ENCODE measurements at regions of chr1 and their contacts with region 1.

Region 1: GRCh38 chr1:109397538-109398342 is at the start of gene SORT1:
- DNase-seq: peak; percentile 94
- H3K4me3 ChIP-seq: peak within 1 kb of the TSS; percentile 84
- H3K27ac ChIP-seq: peak within 1 kb of the TSS; percentile 39
- H3K4me1 ChIP-seq: peaks cover 52% of the 10 kb centered on the region
- CTCF ChIP-seq: peak; percentile 60
- total RNA-seq, gene SORT1: 16.2 and 21.8 TPM in 2 replicates

Region 2: GRCh38 chr1:109099938-109100773 is 297.6 kb before region 1 on chr1:
- CTCF ChIA-PET with region 1: no interaction called
- POLR2A ChIA-PET with region 1: interaction called, 3 read pairs
- intact Hi-C with region 1: loop called (anchors 10 kb)
- DNase-seq: peak; percentile 99
- H3K4me3 ChIP-seq: peak overlapping the region; percentile 98
- H3K27ac ChIP-seq: peak overlapping the region; percentile 64
- H3K4me1 ChIP-seq: peaks cover 9% of the 10 kb centered on the region
- CTCF ChIP-seq: peak; percentile 86

Region 3: DNA sequence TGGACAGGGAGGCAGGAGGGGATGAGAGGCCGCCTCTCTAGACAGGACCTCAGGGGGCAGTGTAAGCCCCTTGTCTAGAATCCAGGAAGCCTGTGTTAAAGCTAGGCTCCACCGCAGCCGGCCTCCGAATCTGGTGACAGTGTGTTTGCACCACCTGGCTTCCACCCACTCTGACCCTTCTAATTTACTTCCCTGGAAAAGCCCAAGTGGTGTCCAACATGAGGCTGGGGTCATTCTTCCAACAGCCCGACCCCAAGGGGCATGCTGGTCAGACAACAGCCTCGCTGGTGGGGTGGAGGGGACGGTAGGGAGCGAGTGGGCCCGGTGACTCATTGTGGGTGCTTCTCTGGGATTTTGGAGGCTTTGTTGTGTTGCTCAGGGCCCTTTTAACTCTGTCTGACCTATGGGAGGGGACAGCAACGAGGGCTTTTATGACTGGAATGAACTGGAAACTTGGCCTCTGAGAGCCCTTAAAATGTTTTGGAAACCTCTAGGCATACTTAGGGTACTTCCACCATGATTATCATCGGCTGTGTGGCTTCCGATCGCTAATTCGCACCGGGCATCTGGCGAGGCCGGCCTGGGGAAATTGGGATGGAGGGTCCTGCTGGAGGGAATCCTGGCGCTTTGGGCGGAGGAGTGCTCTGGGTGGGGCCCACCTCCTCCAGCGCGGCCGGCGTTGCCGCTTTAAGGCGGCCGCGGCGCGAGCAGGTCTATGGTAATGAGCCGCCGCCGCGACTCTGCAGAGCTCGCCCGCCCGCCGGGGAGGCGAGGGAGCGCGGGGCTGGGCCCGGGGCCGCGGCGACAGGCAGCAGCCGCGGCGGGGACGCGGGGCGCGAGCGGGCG is 148.7 kb before region 1 on chr1 and contains the start of gene CELSR2:
- CTCF ChIA-PET with region 1: no interaction called
- POLR2A ChIA-PET with region 1: interaction called, 10 read pairs
- intact Hi-C with region 1: no loop called
- DNase-seq: peak; percentile 88
- H3K4me3 ChIP-seq: peak within 1 kb of the TSS; percentile 72
- H3K27ac ChIP-seq: no peak within 1 kb of the TSS
- H3K4me1 ChIP-seq: peaks cover 21% of the 10 kb centered on the region
- CTCF ChIP-seq: no peak
- total RNA-seq, gene CELSR2: 5.0 and 6.9 TPM in 2 replicates

Region 4: GRCh38 chr1:109277434-109278204 is 120.1 kb before region 1 on chr1:
- CTCF ChIA-PET with region 1: interaction called, 12 read pairs
- POLR2A ChIA-PET with region 1: interaction called, 55 read pairs
- intact Hi-C with region 1: loop called (anchors 1 kb)
- DNase-seq: peak; percentile 83
- H3K4me3 ChIP-seq: no peak overlapping the region
- H3K27ac ChIP-seq: no peak overlapping the region
- H3K4me1 ChIP-seq: peaks cover 12% of the 10 kb centered on the region
- CTCF ChIP-seq: peak; percentile 92

Region 5: GRCh38 chr1:109341944-109342930 is 55.5 kb before region 1 on chr1:
- CTCF ChIA-PET with region 1: no interaction called
- POLR2A ChIA-PET with region 1: no interaction called
- intact Hi-C with region 1: loop called (anchors 5 kb)
- DNase-seq: no peak
- H3K4me3 ChIP-seq: no peak overlapping the region
- H3K27ac ChIP-seq: no peak overlapping the region
- H3K4me1 ChIP-seq: no peaks in the 10 kb centered on the region
- CTCF ChIP-seq: no peak

Region 6: GRCh38 chr1:109386054-109386717 is 11.6 kb before region 1 on chr1:
- CTCF ChIA-PET with region 1: no interaction called
- POLR2A ChIA-PET with region 1: interaction called, 21 read pairs
- intact Hi-C with region 1: no loop called
- DNase-seq: no peak
- H3K4me3 ChIP-seq: no peak overlapping the region
- H3K27ac ChIP-seq: peak overlapping the region; percentile 32
- H3K4me1 ChIP-seq: peaks cover 68% of the 10 kb centered on the region
- CTCF ChIP-seq: no peak

Region 7: DNA sequence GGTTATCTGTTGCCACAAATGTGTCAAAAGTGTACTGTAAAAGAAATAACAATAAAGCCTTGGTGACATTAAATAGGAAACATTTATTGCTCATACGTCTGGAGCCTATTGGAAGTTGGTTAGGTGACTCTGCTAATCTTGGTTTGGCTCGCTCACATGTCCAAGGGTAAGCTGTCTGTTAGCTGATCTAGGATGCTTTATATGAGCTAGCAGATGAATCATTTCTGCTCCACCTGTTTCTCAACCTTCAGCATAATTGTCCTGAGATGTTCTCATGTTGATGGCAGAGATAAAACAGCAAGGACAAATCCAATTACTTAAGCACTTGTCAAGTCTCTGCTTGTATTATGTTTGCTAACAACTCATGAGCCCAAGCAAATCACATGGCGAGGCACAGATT is 1419.2 kb after region 1 on chr1:
- CTCF ChIA-PET with region 1: no interaction called
- POLR2A ChIA-PET with region 1: no interaction called
- intact Hi-C with region 1: no loop called
- DNase-seq: no peak
- H3K4me3 ChIP-seq: no peak overlapping the region
- H3K27ac ChIP-seq: no peak overlapping the region
- H3K4me1 ChIP-seq: no peaks in the 10 kb centered on the region
- CTCF ChIP-seq: no peak